ENCODE measurements at regions of chr1 and their contacts with region 1.

Region 1: GRCh38 chr1:244864253-244865027 is at the start of gene HNRNPU:
- H3K4me3 Mint-ChIP-seq: peak within 1 kb of the TSS; percentile 99
- H3K27ac Mint-ChIP-seq: peak within 1 kb of the TSS; percentile 100
- H3K4me1 Mint-ChIP-seq: peaks cover 30% of the 10 kb centered on the region
- H3K27me3 Mint-ChIP-seq: no peaks in the 10 kb centered on the region

Region 2: DNA sequence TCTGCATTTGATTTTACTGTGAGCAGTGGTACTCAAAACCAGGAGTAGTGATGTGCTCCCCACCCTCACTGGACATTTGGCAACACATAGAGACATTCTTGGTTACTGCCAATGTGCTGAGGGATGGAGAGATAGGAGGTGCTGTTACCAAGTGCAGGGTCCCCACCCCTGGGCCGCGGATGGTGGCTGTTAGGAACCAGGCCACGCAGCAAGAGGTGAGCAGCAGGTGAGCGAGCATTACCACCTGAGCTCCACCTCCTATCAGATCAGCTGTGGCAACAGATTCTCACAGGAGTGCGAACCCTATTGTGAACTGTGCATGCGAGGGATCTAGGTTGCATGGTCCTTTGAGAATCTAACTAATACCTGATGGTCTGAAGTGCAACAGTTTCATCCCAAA is 1110.1 kb before region 1 on chr1:
- intact Hi-C with region 1: no loop called
- H3K4me3 Mint-ChIP-seq: no peak overlapping the region
- H3K27ac Mint-ChIP-seq: no peak overlapping the region
- H3K4me1 Mint-ChIP-seq: no peaks in the 10 kb centered on the region
- H3K27me3 Mint-ChIP-seq: no peaks in the 10 kb centered on the region

Region 3: DNA sequence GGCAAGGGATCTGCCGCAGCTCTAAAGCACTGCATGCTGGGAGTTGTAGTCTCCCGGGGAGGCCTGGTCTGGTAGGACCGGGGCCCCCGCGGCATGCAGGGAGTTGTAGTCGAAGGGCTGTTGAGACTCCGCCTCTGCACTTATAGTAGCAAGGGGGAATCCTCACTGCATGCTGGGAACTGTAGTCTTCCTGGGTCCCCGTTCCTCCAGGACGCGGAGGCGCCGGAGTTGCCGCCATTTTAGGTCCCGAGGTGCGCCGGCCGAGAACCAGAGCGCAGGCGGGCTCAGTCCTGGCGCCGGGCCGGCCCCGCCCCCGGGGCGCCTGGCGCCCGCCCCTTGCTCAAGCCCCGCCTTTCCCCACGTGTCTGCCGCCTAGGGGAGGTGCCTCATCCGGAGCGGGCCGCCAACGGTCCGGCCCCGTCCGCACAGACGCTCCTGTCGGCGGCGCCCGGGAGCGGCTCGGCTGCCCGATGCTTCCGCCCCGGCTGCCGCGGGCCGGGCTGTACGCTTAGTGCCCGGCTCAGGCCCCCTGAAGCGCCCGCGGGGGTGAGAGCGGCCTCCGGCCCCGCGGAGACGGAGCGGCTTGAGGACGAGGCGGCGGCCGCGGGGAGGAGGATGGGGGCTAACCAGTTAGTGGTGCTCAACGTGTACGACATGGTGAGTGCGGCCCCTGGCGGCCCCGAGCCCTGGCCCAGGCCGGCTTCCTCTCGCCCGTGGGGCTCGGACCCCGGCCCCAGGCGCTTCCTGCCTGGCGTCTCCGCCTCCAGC is 211.6 kb before region 1 on chr1 and contains the start of gene DESI2:
- intact Hi-C with region 1: loop called (anchors 5 kb)
- H3K4me3 Mint-ChIP-seq: peak within 1 kb of the TSS; percentile 75
- H3K27ac Mint-ChIP-seq: no peak within 1 kb of the TSS
- H3K4me1 Mint-ChIP-seq: peaks cover 20% of the 10 kb centered on the region
- H3K27me3 Mint-ChIP-seq: peaks cover 4% of the 10 kb centered on the region

Region 4: GRCh38 chr1:244835276-244836134 is 28.9 kb before region 1 on chr1 and contains the start of gene COX20:
- intact Hi-C with region 1: loop called (anchors 1 kb)
- H3K4me3 Mint-ChIP-seq: peak within 1 kb of the TSS; percentile 95
- H3K27ac Mint-ChIP-seq: peak within 1 kb of the TSS; percentile 99
- H3K4me1 Mint-ChIP-seq: peaks cover 33% of the 10 kb centered on the region
- H3K27me3 Mint-ChIP-seq: no peaks in the 10 kb centered on the region

Region 5: DNA sequence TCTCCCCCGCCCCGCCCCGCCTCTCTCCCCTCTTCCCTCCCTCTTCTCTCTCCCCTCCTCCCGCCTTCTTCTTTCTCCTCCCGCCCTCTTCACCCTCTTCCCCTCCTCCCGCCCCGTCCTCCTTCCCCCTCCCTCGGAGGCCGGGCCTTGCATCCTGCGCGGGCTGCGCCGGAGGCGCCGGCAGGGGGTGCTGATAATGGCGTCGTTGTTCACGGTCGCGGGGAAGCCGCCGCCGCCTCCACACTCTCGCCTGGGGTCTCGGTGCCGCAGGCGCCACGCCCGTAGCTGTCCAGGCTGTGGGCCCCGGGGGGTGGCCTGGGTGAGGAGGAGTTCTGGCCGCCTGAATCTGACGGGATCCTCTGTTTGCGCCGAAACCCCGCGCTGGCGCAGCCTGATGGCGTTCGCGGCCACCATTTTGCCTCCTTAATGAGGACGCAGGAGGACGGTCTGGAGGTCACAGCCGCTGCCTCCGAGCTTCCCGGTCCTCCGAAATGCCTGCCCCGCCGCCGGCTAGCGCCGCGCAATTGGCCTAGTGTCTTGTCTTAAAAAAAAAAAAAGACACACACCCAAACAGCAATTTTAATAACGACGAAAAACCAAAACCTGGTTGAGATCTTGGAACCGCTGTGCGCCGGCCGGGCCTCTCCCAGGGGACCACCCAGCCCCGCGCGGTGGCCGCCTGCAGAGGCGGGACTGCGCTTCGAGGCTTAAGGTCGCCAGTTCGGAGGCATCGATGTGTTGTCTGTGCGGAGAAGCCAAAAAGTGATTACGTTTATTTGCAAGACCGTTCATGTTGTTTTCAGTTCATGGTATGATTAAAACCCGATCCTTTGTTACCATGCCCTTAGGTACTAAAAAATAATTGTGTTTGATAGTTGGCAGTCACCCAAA is 106.5 kb after region 1 on chr1:
- intact Hi-C with region 1: loop called (anchors 1 kb)
- H3K4me3 Mint-ChIP-seq: peak overlapping the region; percentile 87
- H3K27ac Mint-ChIP-seq: peak overlapping the region; percentile 99
- H3K4me1 Mint-ChIP-seq: peaks cover 17% of the 10 kb centered on the region
- H3K27me3 Mint-ChIP-seq: no peaks in the 10 kb centered on the region

Measured in dendritic cell treated with granulocyte-macrophage colony-stimulating factor and Interleukin-4, amounts not matched to agents 40 ng/mL and 50 ng/mL, for 4 days (primary cell).